ENCODE measurements at regions of chr20 and their contacts with region 1.

Region 1: GRCh38 chr20:1325173-1326030 is 3.5 kb downstream of the SDCBP2 start:
- DNase-seq: peak; percentile 99
- ATAC-seq: peak; percentile 86
- H3K4me3 Mint-ChIP-seq: no peak overlapping the region
- H3K27ac Mint-ChIP-seq: no peak overlapping the region
- H3K4me1 Mint-ChIP-seq: peaks cover 18% of the 10 kb centered on the region
- H3K27me3 Mint-ChIP-seq: no peaks in the 10 kb centered on the region
- CTCF ChIP-seq: no peak

Region 2: GRCh38 chr20:844473-845225 is 480.8 kb before region 1 on chr20:
- CTCF ChIA-PET with region 1: no interaction called
- POLR2A ChIA-PET with region 1: no interaction called
- intact Hi-C with region 1: no loop called
- DNase-seq: peak; percentile 95
- ATAC-seq: peak; percentile 93
- H3K4me3 Mint-ChIP-seq: peak overlapping the region; percentile 84
- H3K27ac Mint-ChIP-seq: peak overlapping the region; percentile 75
- H3K4me1 Mint-ChIP-seq: peaks cover 43% of the 10 kb centered on the region
- H3K27me3 Mint-ChIP-seq: no peaks in the 10 kb centered on the region
- CTCF ChIP-seq: peak; percentile 26

Region 3: GRCh38 chr20:1232286-1233111 is 92.9 kb before region 1 on chr20:
- CTCF ChIA-PET with region 1: no interaction called
- POLR2A ChIA-PET with region 1: no interaction called
- intact Hi-C with region 1: no loop called
- DNase-seq: no peak
- ATAC-seq: peak; percentile 55
- H3K4me3 Mint-ChIP-seq: no peak overlapping the region
- H3K27ac Mint-ChIP-seq: no peak overlapping the region
- H3K4me1 Mint-ChIP-seq: no peaks in the 10 kb centered on the region
- H3K27me3 Mint-ChIP-seq: peaks cover 11% of the 10 kb centered on the region
- CTCF ChIP-seq: no peak

Region 4: DNA sequence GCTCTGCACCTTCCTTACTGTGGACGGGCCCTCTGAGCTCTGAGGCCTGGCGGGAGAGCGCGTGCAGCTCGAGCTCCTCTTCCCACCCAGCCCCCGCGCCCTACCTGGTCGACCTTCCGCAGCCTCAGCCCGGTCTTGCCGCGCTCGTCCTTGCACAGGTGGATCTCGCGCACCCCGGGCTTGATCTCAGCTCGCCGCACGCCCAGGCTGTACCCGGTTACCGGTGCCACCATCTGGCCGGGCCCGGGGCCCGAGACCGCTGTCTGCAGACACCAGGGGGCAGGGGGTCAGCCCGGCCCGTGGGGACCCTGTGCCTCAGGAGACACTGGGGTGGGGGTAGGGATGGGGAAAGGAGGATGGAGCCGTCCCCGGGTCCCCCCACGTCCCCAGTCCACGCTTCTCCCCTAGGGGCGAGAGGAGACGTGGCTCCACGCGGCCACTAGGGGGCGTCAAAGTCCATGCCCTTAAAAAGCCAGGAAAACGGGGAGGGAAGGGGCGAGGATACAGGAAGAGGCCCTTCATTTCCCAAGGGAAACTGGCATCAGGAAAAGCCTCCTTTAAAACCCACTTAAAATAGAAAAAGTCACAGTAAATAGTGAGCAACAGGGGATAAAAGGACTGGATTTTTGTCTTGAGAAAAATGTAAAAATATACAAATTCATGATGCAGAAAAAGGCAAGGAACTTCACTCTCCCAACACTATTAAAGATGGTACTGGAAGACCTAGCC is 12.0 kb before region 1 on chr20:
- CTCF ChIA-PET with region 1: interaction called, 36 read pairs
- POLR2A ChIA-PET with region 1: no interaction called
- intact Hi-C with region 1: no loop called
- DNase-seq: peak; percentile 65
- ATAC-seq: peak; percentile 81
- H3K4me3 Mint-ChIP-seq: no peak overlapping the region
- H3K27ac Mint-ChIP-seq: no peak overlapping the region
- H3K4me1 Mint-ChIP-seq: peaks cover 13% of the 10 kb centered on the region
- H3K27me3 Mint-ChIP-seq: peaks cover 2% of the 10 kb centered on the region
- CTCF ChIP-seq: peak; percentile 100

Region 5: GRCh38 chr20:1336699-1337367 is 11.4 kb after region 1 on chr20:
- CTCF ChIA-PET with region 1: no interaction called
- POLR2A ChIA-PET with region 1: interaction called, 11 read pairs
- intact Hi-C with region 1: no loop called
- DNase-seq: peak; percentile 31
- ATAC-seq: peak; percentile 68
- H3K4me3 Mint-ChIP-seq: peak overlapping the region; percentile 26
- H3K27ac Mint-ChIP-seq: peak overlapping the region; percentile 84
- H3K4me1 Mint-ChIP-seq: peaks cover 33% of the 10 kb centered on the region
- H3K27me3 Mint-ChIP-seq: no peaks in the 10 kb centered on the region
- CTCF ChIP-seq: no peak

Region 6: DNA sequence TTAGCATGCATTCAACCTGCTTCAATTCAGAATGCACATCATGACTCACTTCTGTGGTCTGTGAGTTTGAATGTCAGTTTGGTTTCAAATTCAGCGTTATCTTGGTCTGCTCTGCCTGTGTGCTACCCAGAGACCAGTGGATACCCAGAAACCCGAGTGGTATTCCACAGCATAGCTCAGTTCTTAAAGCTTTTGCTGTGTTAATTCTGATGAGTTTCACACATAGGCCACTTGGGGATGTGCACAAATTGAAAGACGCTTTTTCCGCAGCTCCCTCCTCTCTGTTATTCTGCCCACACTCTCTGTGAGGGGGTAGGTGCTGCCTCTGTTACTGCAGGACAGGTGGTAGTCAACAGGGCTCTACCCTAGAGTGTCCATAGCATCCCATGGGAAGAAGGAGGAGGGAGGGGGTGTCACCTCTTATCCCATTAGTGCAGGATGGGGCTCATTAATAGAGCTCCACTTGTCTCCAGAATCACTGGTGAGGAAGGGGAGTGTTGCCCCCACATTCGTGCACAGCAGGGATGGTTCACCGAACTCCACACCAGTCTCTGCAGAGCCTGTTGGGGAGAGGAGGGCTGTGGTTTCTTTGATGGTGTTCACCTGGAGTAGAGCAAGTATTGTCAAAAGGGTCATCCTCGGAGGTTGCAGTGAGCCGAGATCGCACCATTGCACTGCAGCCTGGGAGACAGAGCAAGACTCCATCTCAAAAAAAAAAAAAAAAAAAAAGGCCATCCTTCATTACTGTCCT is 32.7 kb after region 1 on chr20:
- CTCF ChIA-PET with region 1: interaction called, 3 read pairs
- POLR2A ChIA-PET with region 1: interaction called, 6 read pairs
- intact Hi-C with region 1: loop called (anchors 5 kb)
- DNase-seq: peak; percentile 72
- ATAC-seq: peak; percentile 93
- H3K4me3 Mint-ChIP-seq: peak overlapping the region; percentile 49
- H3K27ac Mint-ChIP-seq: peak overlapping the region; percentile 88
- H3K4me1 Mint-ChIP-seq: peaks cover 64% of the 10 kb centered on the region
- H3K27me3 Mint-ChIP-seq: no peaks in the 10 kb centered on the region
- CTCF ChIP-seq: peak; percentile 40

Region 7: GRCh38 chr20:1375515-1375914 is 50.1 kb after region 1 on chr20:
- CTCF ChIA-PET with region 1: no interaction called
- POLR2A ChIA-PET with region 1: interaction called, 4 read pairs
- intact Hi-C with region 1: loop called (anchors 5 kb)
- DNase-seq: no peak
- ATAC-seq: no peak
- H3K4me3 Mint-ChIP-seq: no peak overlapping the region
- H3K27ac Mint-ChIP-seq: peak overlapping the region; percentile 60
- H3K4me1 Mint-ChIP-seq: peaks cover 84% of the 10 kb centered on the region
- H3K27me3 Mint-ChIP-seq: no peaks in the 10 kb centered on the region
- CTCF ChIP-seq: no peak

Region 8: GRCh38 chr20:1392823-1393506 is 67.6 kb after region 1 on chr20 and contains the start of gene FKBP1A:
- CTCF ChIA-PET with region 1: interaction called, 3 read pairs
- POLR2A ChIA-PET with region 1: interaction called, 7 read pairs
- intact Hi-C with region 1: loop called (anchors 5 kb)
- DNase-seq: peak; percentile 92
- ATAC-seq: peak; percentile 88
- H3K4me3 Mint-ChIP-seq: peak within 1 kb of the TSS; percentile 82
- H3K27ac Mint-ChIP-seq: peak within 1 kb of the TSS; percentile 91
- H3K4me1 Mint-ChIP-seq: peaks cover 46% of the 10 kb centered on the region
- H3K27me3 Mint-ChIP-seq: no peaks in the 10 kb centered on the region
- CTCF ChIP-seq: no peak
- total RNA-seq, gene FKBP1A: 259 to 282 TPM

Region 9: GRCh38 chr20:1437235-1437904 is 112.0 kb after region 1 on chr20:
- CTCF ChIA-PET with region 1: interaction called, 20 read pairs
- POLR2A ChIA-PET with region 1: interaction called, 3 read pairs
- intact Hi-C with region 1: no loop called
- DNase-seq: peak; percentile 84
- ATAC-seq: peak; percentile 29
- H3K4me3 Mint-ChIP-seq: no peak overlapping the region
- H3K27ac Mint-ChIP-seq: no peak overlapping the region
- H3K4me1 Mint-ChIP-seq: peaks cover 35% of the 10 kb centered on the region
- H3K27me3 Mint-ChIP-seq: no peaks in the 10 kb centered on the region
- CTCF ChIP-seq: peak; percentile 89

Region 10: DNA sequence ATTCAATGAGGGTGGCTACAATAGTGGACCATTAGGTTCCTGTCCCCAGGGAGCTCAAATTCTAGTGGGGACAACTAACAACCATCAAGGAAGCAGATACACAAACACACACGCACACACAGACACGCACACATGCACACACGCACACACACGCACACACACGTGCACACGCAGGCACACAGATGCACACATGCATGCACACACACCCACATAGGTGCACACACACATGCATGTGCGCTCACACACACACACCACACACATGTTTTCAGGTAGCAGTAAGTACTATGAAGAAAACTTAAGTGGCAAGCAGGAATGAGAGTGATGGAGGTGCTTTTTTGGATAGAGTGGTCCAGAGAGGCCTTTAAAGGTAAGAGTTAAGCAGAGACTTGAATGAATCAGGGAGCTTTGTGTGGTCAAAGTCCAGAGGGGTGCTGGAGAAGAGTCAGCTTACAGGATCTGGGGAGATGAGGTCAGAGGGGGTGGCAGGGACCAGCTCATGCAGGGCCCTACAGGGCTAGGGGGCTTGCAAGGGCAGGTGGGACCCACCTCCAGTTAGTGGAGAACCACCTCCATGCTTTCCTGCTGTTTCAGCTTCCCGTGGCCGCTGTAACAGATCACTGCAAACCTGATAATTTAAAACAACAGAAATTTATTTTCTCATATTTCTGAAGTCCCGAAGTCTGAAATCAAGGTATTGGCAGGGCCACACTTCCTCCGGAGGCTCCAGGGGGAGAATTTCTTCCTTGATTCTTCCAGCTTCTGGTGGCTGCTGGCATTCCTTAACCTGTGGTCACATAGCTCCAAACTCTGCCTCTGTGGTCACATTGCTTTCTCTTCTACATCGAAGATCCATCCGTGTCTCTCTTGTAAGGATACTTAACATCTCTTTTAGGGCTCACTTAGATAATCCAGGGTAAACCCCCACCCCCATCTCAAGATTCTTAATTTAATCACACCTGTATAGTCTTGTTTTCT is 148.1 kb after region 1 on chr20:
- CTCF ChIA-PET with region 1: no interaction called
- POLR2A ChIA-PET with region 1: no interaction called
- intact Hi-C with region 1: no loop called
- DNase-seq: no peak
- ATAC-seq: no peak
- H3K4me3 Mint-ChIP-seq: no peak overlapping the region
- H3K27ac Mint-ChIP-seq: no peak overlapping the region
- H3K4me1 Mint-ChIP-seq: no peaks in the 10 kb centered on the region
- H3K27me3 Mint-ChIP-seq: peaks cover 3% of the 10 kb centered on the region
- CTCF ChIP-seq: no peak